CD8-positive, alpha-beta memory T cell (primary cell): ENCODE measurements at regions of chr19 and their contacts with region 1.

Region 1: DNA sequence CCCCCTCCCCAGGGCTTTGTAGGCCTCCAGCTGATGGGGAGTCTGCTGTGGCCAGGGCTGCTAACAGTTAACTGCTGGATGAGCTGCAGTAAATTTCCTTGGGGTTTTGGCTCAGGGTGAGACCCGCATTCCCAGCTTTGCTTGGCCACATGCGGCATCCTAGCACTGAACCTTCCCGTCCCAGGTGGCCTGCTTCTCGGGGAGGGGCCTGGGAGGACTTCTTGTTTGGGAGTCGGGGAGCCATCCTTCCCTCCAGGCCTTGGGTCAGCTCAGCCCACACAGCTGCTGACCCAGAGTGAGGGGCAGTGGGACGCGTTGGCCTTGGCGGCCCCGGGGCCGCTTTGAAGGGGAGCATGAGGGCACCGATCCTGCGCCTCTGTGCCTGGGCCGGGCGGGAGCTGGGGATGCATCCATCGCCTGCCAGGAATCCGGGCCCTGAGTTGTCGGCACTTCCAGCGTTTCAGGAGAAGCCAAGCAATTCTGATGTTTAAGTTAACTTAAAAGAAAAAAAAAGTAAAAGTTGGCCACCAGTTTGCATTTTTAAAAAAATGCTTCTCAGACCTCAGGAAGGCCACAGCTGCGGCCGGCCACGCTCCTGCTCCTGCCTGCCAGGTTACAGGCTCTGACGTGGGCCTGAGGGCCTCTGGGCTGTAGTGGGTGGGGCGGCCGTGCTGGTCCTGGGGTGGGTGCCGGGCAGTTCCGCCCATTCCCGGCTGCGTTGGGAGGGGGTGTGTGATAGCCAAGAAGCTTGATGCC is 27.7 kb downstream of the CRTC1 start:
- DNase-seq: no peak
- H3K4me3 ChIP-seq: no peak overlapping the region
- H3K4me3 Mint-ChIP-seq: no peak overlapping the region
- H3K27ac ChIP-seq: no peak overlapping the region
- H3K27ac Mint-ChIP-seq: no peak overlapping the region
- H3K4me1 ChIP-seq: no peaks in the 10 kb centered on the region
- H3K4me1 Mint-ChIP-seq: peaks cover 16 to 31% (median 17%) of the 10 kb centered on the region in 3 donors
- H3K27me3 ChIP-seq: no peaks in the 10 kb centered on the region
- H3K27me3 Mint-ChIP-seq: no peaks in the 10 kb centered on the region

Region 2: DNA sequence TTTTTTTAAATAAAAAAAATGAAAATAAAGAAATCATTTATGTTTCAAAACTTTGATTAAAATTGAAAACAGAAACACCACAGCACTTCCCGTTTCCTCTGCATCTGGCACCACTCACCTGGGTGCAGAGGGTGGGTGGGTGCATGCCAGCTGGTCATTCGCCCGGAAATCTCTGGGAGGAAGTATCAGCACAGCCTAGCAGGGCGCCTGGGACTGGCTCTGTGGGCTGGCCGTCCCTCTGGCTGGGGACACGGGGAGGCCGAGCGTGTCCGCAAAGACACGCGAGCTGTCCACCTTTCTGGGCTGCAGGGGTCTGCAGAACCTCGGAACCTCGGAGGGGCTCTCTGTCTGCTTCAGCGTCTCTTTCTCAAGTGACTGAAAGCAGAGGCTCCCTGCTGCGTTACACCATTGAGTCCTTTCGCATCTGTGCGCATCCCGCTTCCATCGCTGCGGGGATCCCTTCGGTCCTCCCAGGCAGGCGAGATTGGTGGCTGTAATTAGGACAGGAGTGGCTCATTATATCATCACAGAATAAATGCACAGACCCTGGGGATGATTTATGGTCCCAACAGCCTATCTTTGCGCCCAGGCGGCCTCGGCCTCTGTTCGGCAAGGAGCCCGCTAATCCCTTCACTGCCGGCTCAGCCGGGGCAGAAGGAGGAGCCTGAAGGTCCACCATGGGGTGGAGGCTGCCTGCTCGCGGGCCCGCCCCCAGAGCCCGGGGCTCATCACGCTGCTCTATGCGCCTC is 10.5 kb before region 1 on chr19:
- CTCF ChIA-PET with region 1: no interaction called
- POLR2A ChIA-PET with region 1: interaction called, 10 read pairs
- DNase-seq: peak; percentile 55 to 79 (median 69)
- H3K4me3 ChIP-seq: peak overlapping the region; percentile 72
- H3K4me3 Mint-ChIP-seq: peak overlapping the region; percentile 88 to 95 (median 90)
- H3K27ac ChIP-seq: peak overlapping the region; percentile 51
- H3K27ac Mint-ChIP-seq: peak overlapping the region; percentile 87 to 94 (median 90)
- H3K4me1 ChIP-seq: peaks cover 32% of the 10 kb centered on the region
- H3K4me1 Mint-ChIP-seq: peaks cover 26 to 37% (median 28%) of the 10 kb centered on the region in 3 donors
- H3K27me3 ChIP-seq: no peaks in the 10 kb centered on the region
- H3K27me3 Mint-ChIP-seq: no peaks in the 10 kb centered on the region